ENCODE measurements at regions of chr19 and their contacts with region 1.

Region 1: DNA sequence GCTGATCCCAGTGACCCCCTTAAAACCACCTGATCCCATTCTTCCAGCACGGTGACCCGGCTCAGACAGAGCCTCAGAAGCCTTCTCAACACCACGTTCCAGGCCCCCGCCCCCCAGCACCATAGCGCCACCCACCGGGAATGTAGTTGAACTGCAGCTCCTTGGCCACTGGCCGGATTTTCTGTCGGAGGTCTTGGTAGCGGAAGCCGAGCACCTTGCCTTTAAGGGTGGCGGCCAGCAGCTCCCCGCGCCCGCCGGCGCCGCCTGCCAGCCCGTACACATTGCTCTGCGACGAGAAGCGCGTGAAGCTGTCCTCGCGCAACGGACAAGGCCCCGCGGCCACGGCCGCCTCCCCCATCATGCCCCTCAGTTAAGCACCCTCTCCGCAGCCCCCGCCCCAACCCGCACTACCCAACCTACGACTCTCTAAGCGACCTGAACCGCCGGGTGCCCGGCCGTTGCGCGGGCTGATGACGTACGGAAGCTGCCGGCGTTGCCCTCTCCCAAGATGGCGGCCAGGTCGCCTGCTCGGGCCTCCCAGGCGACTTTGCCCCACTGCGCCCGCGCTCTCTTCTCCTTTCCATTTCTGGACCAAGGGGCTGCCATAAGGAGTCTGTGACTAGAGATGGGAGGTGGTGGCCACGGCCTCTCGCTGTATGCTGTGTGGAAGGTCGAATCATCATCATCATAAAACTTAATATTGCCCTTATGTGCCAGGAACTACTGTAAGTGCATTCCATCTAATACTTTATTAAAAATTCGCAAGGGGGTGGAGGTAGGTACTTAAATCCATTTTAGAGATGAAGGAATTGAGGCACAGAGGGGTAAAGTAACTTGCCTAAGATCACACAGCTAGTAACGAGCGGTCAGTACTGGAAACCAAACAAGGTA is at the start of gene KPTN:
- DNase-seq: peak; percentile 58
- H3K4me3 ChIP-seq: peak within 1 kb of the TSS; percentile 74
- CTCF ChIP-seq: peak; percentile 99

Region 2: GRCh38 chr19:47381653-47382279 is 102.3 kb before region 1 on chr19:
- CTCF ChIA-PET with region 1: no interaction called
- POLR2A ChIA-PET with region 1: no interaction called
- DNase-seq: no peak
- H3K4me3 ChIP-seq: no peak overlapping the region
- CTCF ChIP-seq: no peak

Region 3: GRCh38 chr19:47436712-47437401 is 47.2 kb before region 1 on chr19:
- CTCF ChIA-PET with region 1: interaction called, 12 read pairs
- POLR2A ChIA-PET with region 1: no interaction called
- DNase-seq: no peak
- H3K4me3 ChIP-seq: no peak overlapping the region
- CTCF ChIP-seq: peak; percentile 87

Region 4: GRCh38 chr19:47499863-47500830 is 16.1 kb after region 1 on chr19:
- CTCF ChIA-PET with region 1: interaction called, 17 read pairs
- POLR2A ChIA-PET with region 1: interaction called, 3 read pairs
- DNase-seq: no peak
- H3K4me3 ChIP-seq: no peak overlapping the region
- CTCF ChIP-seq: no peak

Region 5: DNA sequence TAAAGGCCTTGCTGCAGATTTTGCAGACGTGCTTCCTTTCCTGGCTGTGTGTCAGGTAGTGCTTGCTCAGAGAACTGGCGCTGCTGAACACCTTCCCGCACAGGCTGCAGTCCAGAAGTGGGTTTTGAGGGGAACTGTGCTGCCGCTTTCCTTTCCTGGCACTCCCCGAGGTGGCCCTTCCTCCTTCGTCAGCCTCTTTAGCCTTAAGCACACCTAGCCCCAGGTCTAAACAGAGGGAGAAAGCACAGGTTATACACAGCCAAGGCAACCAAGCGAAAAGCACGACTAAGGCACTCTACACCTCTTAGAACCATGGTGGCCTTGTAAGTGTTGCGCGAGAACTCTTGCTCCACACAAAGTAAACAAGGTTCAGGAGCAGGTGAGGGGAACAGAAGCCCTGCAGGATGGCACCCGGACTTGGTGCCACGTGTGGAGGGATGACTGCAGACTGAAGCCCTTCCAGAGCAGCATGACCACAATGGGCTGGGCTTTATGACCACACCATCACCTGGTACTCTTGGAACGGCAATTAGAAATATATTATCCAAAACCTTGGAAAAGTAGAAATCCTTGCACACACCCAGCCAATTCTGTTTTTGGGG is 65.3 kb after region 1 on chr19:
- CTCF ChIA-PET with region 1: no interaction called
- POLR2A ChIA-PET with region 1: no interaction called
- DNase-seq: no peak
- H3K4me3 ChIP-seq: no peak overlapping the region
- CTCF ChIP-seq: no peak

Region 6: DNA sequence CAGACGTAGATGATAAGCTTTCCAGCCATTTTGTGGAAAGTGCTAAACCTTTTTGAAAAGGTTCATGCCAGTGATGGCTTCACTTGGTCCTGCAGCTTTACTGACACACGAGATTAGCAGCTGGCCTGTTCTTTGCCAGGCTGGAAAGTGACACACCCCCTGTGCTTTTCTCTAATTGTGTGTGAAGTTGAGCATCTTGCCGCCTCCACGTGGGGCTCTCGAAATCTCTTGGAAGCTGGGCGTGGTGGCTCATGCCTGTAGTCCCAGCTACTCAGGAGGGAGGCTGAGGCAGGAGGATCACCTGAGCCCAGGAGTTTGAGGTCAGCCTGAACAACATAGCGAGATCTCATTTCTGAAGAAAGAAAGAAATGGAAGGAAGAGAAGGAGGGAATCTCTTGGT is 203.9 kb after region 1 on chr19:
- CTCF ChIA-PET with region 1: interaction called, 10 read pairs
- POLR2A ChIA-PET with region 1: no interaction called
- DNase-seq: no peak
- H3K4me3 ChIP-seq: no peak overlapping the region
- CTCF ChIP-seq: no peak

Measured in AG04449 (cell line).